ENCODE measurements at regions of chr15 and their contacts with region 1.

Region 1: DNA sequence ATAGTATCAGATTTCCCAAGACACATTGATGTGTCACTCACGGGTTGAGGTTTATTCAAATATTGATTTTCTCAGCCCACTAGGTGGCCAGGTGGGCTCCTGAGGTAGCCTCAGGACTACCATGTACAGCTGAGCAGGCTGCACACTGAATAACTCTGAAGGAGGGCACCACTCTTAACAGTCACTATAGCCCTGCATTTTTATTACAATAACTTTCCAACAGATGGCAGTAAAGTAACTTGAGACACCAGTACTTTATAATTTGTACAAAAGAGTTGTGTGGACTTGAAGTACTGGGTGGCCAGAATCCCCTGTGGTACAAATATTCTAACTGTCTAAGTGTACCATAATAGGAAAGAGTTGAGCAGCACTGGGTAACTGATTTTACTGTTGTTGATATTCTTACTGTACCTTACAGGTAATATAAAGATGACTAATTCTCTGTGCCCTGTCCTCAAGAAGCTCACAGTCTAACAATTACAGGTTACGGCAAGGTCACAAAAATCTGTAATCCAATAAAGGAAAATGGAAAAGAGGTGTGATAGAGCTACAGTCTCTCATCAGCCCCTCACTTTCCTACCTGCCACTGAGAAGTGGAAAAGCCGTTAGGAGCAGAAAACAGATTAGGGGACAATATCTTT is 76.0 kb downstream of the ETFA start:
- DNase-seq: no peak
- ATAC-seq: peak; percentile 69
- H3K4me3 Mint-ChIP-seq: no peak overlapping the region
- H3K27ac Mint-ChIP-seq: no peak overlapping the region
- H3K4me1 Mint-ChIP-seq: no peaks in the 10 kb centered on the region
- H3K27me3 Mint-ChIP-seq: no peaks in the 10 kb centered on the region

Region 2: GRCh38 chr15:76333720-76334437 is 98.6 kb after region 1 on chr15:
- CTCF ChIA-PET with region 1: interaction called, 14 read pairs
- POLR2A ChIA-PET with region 1: no interaction called
- DNase-seq: no peak
- ATAC-seq: no peak
- H3K4me3 Mint-ChIP-seq: no peak overlapping the region
- H3K27ac Mint-ChIP-seq: no peak overlapping the region
- H3K4me1 Mint-ChIP-seq: peaks cover 31% of the 10 kb centered on the region
- H3K27me3 Mint-ChIP-seq: peaks cover 51% of the 10 kb centered on the region

Region 3: GRCh38 chr15:76866716-76867321 is 631.5 kb after region 1 on chr15:
- CTCF ChIA-PET with region 1: interaction called, 14 read pairs
- POLR2A ChIA-PET with region 1: no interaction called
- DNase-seq: peak; percentile 25
- ATAC-seq: no peak
- H3K4me3 Mint-ChIP-seq: no peak overlapping the region
- H3K27ac Mint-ChIP-seq: no peak overlapping the region
- H3K4me1 Mint-ChIP-seq: peaks cover 13% of the 10 kb centered on the region
- H3K27me3 Mint-ChIP-seq: no peaks in the 10 kb centered on the region

Measured in activated CD8-positive, alpha-beta T cell treated with anti-CD3 and anti-CD28 coated beads, Interleukin-2, amount 10 ng/mL, durations not matched to agents 7 days and 5 days (primary cell).